Gastrocnemius medialis (tissue), 4 donors: ENCODE measurements at regions of chr19 and their contacts with region 1.

Region 1: GRCh38 chr19:10403137-10404021 is at the start of gene CDC37:
- DNase-seq: peak; percentile 91 to 96
- ATAC-seq: peak; percentile 84 to 88
- H3K4me3 ChIP-seq: peak within 1 kb of the TSS; percentile 73 to 100 (median 84)
- H3K27ac ChIP-seq: peak within 1 kb of the TSS; percentile 87 to 98 (median 90)
- H3K4me1 ChIP-seq: peaks cover 44 to 51% of the 10 kb centered on the region in 2 donors
- H3K27me3 ChIP-seq: peaks cover 13 to 23% (median 22%) of the 10 kb centered on the region in 3 donors
- CTCF ChIP-seq: no peak
- POLR2A ChIP-seq: peak; percentile 94 to 96
- total RNA-seq, gene CDC37: 133 to 189 (median 163) TPM

Region 2: DNA sequence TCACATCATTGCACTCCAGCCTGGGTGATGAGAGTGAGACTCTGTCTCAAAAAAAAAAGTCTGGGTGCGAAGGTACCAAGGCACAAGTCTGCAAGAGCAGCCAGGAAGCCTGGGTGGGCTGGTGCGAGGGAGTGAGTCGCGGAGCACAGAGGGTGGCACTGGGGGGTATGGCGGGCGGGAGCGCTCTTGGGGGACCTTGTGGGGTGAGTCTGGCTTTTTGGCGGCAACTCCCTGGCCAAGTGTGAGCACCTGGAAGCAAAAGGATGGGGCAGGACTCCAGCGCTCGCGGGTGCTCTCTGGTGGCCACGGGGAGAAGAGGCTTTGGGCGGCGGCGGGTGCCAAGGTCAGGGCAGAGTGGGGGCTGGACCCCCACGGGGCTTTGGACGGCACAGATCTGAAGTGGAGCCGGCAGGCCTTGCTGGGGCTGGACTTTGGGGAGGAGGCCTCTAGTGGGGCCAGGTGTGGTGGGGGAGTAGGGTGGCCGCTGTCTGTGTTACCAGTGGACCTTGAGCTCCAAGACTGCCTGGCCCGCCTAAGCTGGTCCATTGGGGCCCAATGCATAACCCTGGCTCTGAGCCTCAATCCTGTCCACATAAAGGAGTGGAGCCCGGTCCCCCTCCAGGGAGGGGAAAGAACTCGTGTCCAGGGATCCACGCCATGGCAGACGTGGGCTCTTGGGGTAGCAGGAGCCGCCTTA is 290.3 kb before region 1 on chr19:
- in situ Hi-C with region 1: loop called in 1 of 4 experiments (anchors 10 kb)
- intact Hi-C with region 1: loop called (anchors 5 kb)
- DNase-seq: no peak
- ATAC-seq: no peak
- H3K4me3 ChIP-seq: no peak overlapping the region
- H3K27ac ChIP-seq: peak overlapping the region in 1 of 4 donors; percentile 27
- H3K4me1 ChIP-seq: peaks cover 4 to 17% of the 10 kb centered on the region in 2 donors
- H3K27me3 ChIP-seq: no peaks in the 10 kb centered on the region
- CTCF ChIP-seq: peak in 4 of 5 experiments; percentile 27 to 54 (median 38)
- POLR2A ChIP-seq: no peak

Region 3: GRCh38 chr19:10424011-10424637 is 20.7 kb after region 1 on chr19:
- in situ Hi-C with region 1: no loop called
- intact Hi-C with region 1: loop called (anchors 1 kb)
- DNase-seq: peak in 1 of 2 donors; percentile 72
- ATAC-seq: peak; percentile 87 to 95
- H3K4me3 ChIP-seq: peak overlapping the region; percentile 49 to 62 (median 55)
- H3K27ac ChIP-seq: peak overlapping the region in 3 of 4 donors; percentile 54 to 58 (median 57)
- H3K4me1 ChIP-seq: peaks cover 17 to 23% of the 10 kb centered on the region in 2 donors
- H3K27me3 ChIP-seq: peaks cover 38 to 40% (median 38%) of the 10 kb centered on the region in 3 donors
- CTCF ChIP-seq: peak; percentile 84 to 95 (median 92)
- POLR2A ChIP-seq: no peak

Region 4: DNA sequence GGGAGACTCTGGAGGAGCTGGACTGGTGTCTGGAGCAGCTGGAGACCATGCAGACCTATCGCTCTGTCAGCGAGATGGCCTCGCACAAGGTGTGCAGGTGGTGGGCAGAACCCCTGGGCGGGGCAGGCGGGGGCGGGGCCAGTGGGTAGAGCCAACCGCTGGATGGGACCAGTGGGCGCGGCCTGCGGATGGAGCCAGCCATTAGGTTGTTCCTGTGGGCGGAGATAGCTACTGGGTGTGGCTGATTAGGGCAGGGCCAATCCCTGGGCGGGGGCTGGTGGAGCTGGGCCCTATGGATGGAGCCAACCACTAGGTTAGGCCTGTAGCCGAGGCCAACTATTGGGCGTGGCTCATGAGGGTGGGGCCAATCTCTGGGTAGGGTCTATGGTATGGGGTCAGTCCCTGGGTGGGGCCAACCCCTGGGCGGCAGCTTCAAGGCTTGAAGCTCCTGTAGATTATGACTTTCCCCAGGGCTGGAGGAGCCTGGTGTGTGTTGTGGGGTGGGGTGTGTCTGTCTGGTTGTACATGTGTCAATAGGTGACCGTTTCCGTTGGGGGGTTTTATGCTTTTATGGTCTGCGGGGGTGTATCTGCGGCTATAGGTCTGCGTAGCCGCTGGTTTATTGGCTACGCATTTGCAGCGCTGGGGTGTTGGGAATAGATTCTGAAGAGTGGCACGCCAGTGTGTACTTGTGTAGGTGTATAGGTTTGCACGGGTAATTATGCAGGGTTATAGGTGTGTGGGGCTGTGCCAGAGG is 47.7 kb after region 1 on chr19:
- in situ Hi-C with region 1: no loop called
- intact Hi-C with region 1: no loop called
- DNase-seq: no peak
- ATAC-seq: no peak
- H3K4me3 ChIP-seq: no peak overlapping the region
- H3K27ac ChIP-seq: no peak overlapping the region
- H3K4me1 ChIP-seq: no peaks in the 10 kb centered on the region
- H3K27me3 ChIP-seq: no peaks in the 10 kb centered on the region
- CTCF ChIP-seq: no peak
- POLR2A ChIP-seq: no peak

Region 5: DNA sequence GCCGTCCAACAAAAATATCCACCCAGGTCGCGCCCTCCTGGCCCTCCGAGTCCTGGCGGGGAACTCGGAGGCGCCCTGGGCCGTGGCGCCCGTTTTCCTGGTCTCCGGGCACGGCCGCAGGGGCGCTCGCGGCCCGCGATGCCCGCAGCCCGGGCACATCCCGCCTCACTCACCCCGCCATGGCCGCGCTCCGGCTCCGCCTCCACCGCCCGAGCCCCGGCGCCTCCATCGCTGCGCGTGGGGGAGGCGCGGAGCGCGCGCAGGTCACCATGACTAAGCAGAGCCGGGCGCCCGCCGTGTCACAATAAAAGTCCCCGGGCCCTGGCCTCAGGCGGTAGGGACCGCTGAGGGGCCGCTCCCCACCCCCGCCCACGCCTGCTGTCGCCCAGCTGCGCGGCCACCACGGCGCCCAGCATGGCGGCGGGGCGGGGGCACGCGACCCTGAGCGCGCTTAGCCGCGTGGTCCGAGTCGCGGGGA is 99.2 kb after region 1 on chr19:
- in situ Hi-C with region 1: no loop called
- intact Hi-C with region 1: loop called (anchors 5 kb)
- DNase-seq: peak; percentile 89 to 94
- ATAC-seq: peak; percentile 79 to 89
- H3K4me3 ChIP-seq: peak overlapping the region; percentile 77 to 96 (median 92)
- H3K27ac ChIP-seq: peak overlapping the region; percentile 96 to 100 (median 98)
- H3K4me1 ChIP-seq: peaks cover 30 to 39% of the 10 kb centered on the region in 2 donors
- H3K27me3 ChIP-seq: no peaks in the 10 kb centered on the region
- CTCF ChIP-seq: peak in 2 of 5 experiments; percentile 25 to 41
- POLR2A ChIP-seq: peak; percentile 82 to 84

Region 6: DNA sequence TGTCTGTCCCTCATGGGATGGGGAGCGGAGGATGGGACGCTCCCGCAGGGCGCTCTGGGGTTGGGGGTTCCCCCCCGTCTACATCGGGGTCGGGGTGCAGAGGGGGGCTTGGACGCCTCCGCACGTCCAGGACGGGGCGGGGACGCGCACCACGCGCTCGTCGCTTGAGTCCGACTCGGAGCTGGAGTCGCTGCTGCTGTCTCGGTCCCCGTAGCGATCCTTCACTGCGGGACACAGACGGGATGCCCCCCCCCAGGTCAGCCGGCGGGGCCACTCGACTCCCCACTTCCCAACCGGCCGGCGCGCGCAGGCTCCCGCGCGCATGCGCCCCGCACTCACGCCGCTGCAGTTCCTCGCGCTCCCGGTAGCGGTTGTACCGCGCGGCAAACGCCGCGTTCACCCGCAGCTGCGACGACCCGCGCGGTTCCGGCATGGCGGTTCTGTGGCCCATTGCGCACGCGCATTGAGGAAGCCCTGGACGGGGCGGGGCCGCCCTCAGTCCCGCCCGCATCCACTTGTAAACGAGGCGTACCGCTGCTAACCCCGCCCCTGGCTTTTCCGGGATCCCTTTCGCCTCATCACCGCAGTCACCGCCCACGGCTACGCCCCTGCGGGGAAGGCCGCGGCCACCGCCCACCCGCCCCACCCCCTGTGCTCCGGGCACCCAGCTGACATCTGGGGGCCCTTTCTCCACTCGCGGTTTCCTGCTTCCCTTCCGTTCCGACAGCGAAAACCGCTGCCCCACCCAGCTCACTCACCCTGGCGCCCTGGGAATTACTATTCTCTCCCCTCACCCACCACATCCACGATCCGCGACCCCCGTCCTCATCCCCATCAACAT is 162.4 kb after region 1 on chr19 and contains the start of gene KRI1:
- in situ Hi-C with region 1: loop called in 1 of 4 experiments (anchors 25 kb)
- intact Hi-C with region 1: loop called (anchors 1 kb)
- DNase-seq: peak; percentile 97
- ATAC-seq: peak; percentile 77 to 80
- H3K4me3 ChIP-seq: peak within 1 kb of the TSS; percentile 68 to 94 (median 86)
- H3K27ac ChIP-seq: peak within 1 kb of the TSS; percentile 84 to 92 (median 92)
- H3K4me1 ChIP-seq: peaks cover 34 to 35% of the 10 kb centered on the region in 2 donors
- H3K27me3 ChIP-seq: no peaks in the 10 kb centered on the region
- CTCF ChIP-seq: peak; percentile 34 to 75 (median 55)
- POLR2A ChIP-seq: peak; percentile 80 to 94
- total RNA-seq, gene KRI1: 16.8 to 24.1 (median 19.9) TPM

Region 7: DNA sequence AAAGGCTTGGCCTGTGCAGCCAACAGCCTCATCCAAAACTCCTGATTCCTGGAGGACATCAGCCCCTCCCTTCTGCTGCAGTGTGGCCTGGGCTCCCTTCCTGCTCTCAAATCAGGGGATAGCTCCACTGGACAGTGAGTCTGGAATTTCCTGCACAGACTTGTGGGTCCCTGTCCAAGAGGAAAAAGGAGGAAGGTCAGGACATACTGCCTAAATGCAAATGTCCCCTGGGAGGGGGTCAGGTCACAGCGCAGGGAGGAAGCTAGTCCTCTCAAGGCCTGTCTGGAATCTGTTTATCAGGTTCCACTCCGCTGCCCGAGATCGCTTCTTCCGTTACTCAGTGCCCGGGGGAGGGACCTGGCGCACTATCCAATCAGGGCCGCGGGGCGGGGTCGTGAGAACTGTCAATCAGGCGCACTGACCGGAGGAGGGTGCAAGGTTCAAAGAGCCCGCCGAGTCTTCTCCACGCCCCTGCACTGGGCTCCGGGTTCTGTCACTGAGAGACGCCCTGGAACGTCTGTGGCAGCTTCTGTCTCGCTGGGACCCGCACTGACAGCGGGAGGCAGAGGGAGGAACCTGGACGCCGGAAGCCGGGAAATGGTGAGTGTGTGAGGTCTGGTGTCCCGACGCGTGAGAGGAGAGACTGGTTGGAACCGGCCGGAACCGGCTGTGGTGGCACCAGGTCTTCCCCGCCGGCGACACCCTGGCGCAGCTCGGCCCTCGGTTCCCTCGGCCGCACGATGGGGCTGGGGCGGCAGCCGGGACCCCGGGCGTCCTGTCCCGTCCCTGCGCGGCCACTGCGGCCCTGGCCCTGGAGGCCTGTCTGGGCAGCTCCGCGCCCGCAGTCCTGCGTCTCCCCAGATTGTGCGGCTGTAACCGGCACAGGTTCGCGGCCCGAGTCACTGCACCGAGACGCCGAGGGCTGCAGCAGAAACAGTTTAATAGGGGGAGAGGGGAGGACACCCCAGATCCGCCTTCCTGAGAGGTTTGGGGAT is 1363.5 kb after region 1 on chr19 and contains the start of gene ZNF441:
- in situ Hi-C with region 1: no loop called
- intact Hi-C with region 1: no loop called
- DNase-seq: peak; percentile 95
- ATAC-seq: peak; percentile 97 to 98
- H3K4me3 ChIP-seq: peak within 1 kb of the TSS; percentile 71 to 86 (median 82)
- H3K27ac ChIP-seq: peak within 1 kb of the TSS; percentile 85 to 89 (median 86)
- H3K4me1 ChIP-seq: peaks cover 9 to 14% of the 10 kb centered on the region in 2 donors
- H3K27me3 ChIP-seq: no peaks in the 10 kb centered on the region
- CTCF ChIP-seq: no peak
- POLR2A ChIP-seq: peak; percentile 57 to 66
- total RNA-seq, gene ZNF441: 1.1 to 7.6 (median 2.9) TPM

Region 8: DNA sequence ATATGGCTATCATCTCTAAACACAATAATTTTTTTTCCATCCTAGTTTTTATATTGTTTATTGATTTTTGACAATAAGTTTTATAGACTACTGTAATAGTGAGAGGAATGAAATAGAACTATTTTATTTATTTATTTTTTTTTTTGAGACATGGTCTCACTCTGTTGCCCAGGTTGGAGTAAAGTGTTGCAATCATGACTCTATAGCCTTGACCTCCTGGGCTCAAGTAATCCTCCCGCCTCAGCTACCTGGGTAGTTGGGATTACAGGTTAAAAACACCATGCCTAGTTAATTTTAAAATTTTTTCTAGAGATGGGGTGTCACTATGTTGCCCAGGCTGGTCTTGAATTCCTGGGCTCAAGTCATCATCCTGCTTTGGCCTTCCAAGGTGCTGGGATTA is 1970.6 kb after region 1 on chr19:
- in situ Hi-C with region 1: no loop called
- intact Hi-C with region 1: no loop called
- DNase-seq: no peak
- ATAC-seq: no peak
- H3K4me3 ChIP-seq: no peak overlapping the region
- H3K27ac ChIP-seq: no peak overlapping the region
- H3K4me1 ChIP-seq: no peaks in the 10 kb centered on the region
- H3K27me3 ChIP-seq: no peaks in the 10 kb centered on the region
- CTCF ChIP-seq: no peak
- POLR2A ChIP-seq: no peak